Activated CD4-positive, alpha-beta memory T cell treated with anti-CD3 and anti-CD28 coated beads, Interleukin-2, amount 10 ng/mL, durations not matched to agents 7 days and 5 days (primary cell): ENCODE measurements at regions of chr19 and their contacts with region 1.

Region 1: GRCh38 chr19:39341719-39342604 is at the start of gene SAMD4B:
- DNase-seq: peak; percentile 99
- H3K4me3 Mint-ChIP-seq: peak within 1 kb of the TSS; percentile 98
- H3K27ac Mint-ChIP-seq: peak within 1 kb of the TSS; percentile 95
- H3K4me1 Mint-ChIP-seq: peaks cover 71% of the 10 kb centered on the region
- H3K27me3 Mint-ChIP-seq: no peaks in the 10 kb centered on the region
- total RNA-seq, gene SAMD4B: 53.9 to 54.8 TPM

Region 2: GRCh38 chr19:39397360-39398296 is 55.7 kb after region 1 on chr19:
- CTCF ChIA-PET with region 1: interaction called, 14 read pairs
- POLR2A ChIA-PET with region 1: interaction called, 25 read pairs
- DNase-seq: peak; percentile 95
- H3K4me3 Mint-ChIP-seq: peak overlapping the region; percentile 68
- H3K27ac Mint-ChIP-seq: peak overlapping the region; percentile 96
- H3K4me1 Mint-ChIP-seq: peaks cover 76% of the 10 kb centered on the region
- H3K27me3 Mint-ChIP-seq: no peaks in the 10 kb centered on the region

Region 3: DNA sequence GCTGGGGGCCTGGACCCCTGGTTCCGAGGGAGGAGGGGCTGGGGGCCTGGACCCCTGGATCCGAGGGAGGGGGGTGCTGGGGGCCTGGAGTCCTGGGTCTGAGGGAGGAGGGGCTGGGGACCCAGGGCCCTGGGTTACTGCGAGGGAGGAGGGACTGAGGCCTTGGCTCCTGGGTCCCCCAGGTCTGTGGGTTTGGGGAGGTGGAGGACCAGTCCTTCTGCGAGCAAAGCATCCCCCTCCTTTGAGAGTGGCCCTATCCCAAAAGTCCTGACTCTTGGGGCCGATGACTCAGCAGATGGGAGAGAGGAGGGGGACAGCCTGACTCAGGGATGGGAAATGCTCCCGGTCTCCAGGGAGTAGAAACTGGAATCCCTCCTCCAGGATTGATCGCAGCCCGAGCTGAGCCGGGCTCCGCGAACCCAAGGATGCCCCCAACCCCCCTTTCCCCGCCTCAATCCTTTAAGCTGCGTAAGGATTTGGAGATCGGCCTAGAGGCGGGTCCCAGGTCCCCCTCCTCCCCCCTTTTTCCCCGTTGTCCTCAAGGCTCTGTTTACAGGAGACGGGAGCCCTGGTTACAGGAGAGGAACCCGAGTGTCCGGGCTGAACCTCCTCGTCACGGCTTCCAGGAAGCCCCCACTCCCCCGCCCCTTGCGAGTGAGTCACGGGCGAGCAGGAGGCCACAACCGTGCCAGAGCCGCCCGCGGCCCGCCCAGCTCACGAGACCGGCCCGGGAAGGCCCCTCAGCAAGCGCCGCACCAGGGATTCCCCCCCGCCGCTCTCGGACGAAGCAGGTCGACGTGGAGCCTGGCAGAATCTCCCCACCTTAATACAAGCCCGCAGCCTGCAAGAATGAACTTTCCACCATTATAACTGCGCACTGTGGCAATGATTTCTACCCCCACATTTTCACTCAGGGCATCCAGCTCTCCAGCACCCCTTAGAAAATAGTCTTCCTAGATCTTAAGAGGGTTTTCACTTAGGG is 61.7 kb after region 1 on chr19:
- CTCF ChIA-PET with region 1: interaction called, 14 read pairs
- POLR2A ChIA-PET with region 1: interaction called, 25 read pairs
- DNase-seq: peak; percentile 95
- H3K4me3 Mint-ChIP-seq: peak overlapping the region; percentile 76
- H3K27ac Mint-ChIP-seq: peak overlapping the region; percentile 98
- H3K4me1 Mint-ChIP-seq: peaks cover 65% of the 10 kb centered on the region
- H3K27me3 Mint-ChIP-seq: no peaks in the 10 kb centered on the region